Right ventricle myocardium superior (tissue), 1 donor: ENCODE measurements at regions of chr6 and their contacts with region 1.

Region 1: GRCh38 chr6:168355716-168356449 is 36.3 kb upstream of the DACT2 start:
- DNase-seq: peak; percentile 68
- ATAC-seq: peak; percentile 92

Region 2: DNA sequence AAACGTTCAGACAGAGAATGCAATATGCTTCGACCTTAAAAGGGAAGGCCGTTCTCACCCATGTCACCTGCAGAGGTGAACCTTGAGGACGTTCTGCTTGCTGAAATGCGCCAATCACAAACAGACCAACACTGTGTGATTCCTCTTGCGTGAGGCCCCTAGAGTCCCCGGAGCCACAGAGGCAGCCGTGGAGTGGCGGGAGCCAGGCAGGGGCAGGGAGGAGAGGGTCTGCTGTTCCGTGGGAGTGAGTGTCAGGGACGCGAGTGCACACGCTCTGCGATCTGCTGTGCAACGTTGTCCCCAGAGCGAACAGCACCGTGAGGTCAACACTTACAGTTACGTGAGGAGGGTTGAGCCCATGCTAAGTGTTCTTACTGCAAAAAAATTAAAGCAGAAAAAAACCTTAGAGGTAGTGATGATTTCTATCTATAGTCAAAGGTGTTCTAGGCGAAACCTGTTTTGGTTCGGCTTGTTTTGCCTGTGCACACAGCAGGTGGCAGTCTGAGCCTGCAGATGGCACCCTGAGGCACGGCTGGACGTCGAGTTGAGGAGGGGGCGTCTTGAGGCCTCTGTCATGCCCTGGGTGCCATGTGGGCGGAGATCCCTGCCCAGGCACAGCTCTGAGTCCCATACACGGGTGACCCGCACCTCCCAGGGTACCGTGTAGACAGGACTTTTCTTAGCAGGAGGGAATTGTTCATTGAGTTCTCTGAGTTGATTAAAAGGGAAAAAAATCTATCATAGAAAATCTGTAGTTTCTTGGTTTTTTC is 205.1 kb before region 1 on chr6:
- intact Hi-C with region 1: loop called (anchors 5 kb)
- DNase-seq: no peak
- ATAC-seq: no peak